Head of caudate nucleus (tissue), 42 donors: ENCODE measurements at regions of chr2 and their contacts with region 1.

Region 1: DNA sequence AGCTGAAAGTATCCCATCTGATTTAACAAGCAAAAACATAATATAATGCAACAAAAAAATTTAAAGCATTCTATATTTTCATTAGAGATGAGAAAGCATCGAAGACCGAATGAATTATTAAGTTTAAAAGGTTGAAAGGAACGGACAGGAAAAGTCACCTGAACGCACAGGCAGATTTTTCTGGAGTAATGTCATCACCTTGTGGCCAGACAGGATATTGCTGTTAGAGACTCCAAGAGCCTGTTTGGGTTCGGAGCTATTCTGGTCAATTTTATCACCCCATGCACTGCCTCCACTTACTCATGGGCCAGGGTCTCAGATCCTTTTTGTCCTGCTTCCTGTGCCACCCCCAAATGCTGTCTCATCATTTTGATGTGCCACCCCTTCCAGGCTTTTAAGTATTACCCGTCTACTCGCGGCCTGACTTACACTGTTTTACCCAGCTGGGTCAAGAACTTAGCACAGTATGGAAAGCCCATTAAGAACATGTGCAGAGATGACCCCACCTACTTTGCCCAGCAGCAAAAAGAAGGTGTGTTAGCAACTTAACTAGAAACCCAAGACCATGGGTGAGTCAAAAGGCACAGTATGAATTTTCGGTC is 27.3 kb downstream of the GKN2 start:
- DNase-seq: peak in 22 of 42 donors; percentile 14 to 73 (median 50)

Region 2: DNA sequence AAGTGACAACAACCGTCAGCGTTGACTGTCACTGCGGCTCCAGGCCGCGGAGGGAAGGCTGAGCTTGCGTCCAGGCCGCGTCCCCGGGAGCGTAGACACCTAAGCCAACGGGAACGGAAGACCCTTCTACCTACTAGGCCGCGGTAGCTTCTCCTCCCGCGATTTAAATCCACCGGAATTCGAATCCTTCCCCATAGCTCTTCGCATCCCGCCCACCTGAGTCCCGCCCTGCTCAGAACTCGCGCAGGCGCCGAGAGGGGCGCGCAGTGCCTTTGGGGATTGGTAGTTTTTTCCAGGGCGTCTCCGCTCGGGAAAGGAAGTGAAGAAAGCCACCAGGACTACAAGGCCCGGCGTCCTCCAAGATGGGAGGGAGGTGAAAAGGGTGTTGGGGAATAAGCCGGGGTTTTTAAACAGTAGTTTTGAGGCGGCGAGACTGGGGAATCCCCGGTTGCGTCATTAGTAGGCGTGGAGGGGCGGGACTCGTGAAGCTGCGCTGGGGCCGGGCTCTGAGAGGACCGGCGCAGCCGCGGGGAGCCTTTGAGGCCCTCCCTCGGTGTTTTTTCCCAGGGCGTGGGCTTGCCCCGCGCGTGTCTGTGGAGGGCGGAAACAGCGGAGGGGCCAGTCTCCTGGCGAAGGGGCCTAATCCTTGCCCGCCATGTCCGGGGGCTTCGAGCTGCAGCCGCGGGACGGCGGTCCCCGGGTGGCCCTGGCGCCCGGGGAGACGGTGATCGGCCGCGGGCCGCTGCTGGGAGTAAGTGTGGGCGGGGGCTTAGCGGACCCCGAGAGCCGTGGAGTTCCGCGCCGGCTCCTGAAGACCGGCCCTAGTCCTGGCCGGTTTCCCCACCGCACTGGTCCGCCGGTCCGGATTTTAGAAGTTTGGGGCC is 458.1 kb before region 1 on chr2 and contains the starts of genes APLF and FBXO48:
- intact Hi-C with region 1: loop called (anchors 10 kb)
- DNase-seq: peak; percentile 92 to 99 (median 98)

Region 3: GRCh38 chr2:69095305-69095704 is 169.9 kb after region 1 on chr2:
- intact Hi-C with region 1: no loop called
- DNase-seq: peak in 3 of 42 donors; percentile 6 to 43 (median 29)